BJ (cell line): ENCODE measurements at regions of chr10 and their contacts with region 1.

Region 1: DNA sequence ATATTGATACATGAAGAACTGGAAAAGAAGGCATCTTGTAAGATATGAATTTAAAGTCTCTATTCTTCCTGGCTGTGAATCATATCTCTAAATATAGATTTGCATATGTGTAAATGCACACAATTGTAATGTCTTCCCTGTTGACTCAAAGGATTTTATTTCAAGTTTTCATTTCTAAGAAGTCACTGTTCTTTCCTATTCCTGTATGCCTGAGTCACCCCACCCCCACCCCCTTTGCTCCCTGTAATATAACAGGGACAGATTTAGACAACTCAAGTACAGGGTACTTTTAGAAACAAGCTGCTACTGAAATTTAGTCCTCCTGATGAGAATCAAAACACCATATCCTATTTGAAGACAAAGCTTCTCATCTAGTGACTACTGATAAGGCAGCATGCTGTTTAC is 43.0 kb upstream of the HECTD2 start:
- DNase-seq: no peak
- H3K4me3 ChIP-seq: no peak overlapping the region
- H3K27me3 ChIP-seq: no peaks in the 10 kb centered on the region; the same call in 1 of the 2 replicates
- CTCF ChIP-seq: no peak

Region 2: DNA sequence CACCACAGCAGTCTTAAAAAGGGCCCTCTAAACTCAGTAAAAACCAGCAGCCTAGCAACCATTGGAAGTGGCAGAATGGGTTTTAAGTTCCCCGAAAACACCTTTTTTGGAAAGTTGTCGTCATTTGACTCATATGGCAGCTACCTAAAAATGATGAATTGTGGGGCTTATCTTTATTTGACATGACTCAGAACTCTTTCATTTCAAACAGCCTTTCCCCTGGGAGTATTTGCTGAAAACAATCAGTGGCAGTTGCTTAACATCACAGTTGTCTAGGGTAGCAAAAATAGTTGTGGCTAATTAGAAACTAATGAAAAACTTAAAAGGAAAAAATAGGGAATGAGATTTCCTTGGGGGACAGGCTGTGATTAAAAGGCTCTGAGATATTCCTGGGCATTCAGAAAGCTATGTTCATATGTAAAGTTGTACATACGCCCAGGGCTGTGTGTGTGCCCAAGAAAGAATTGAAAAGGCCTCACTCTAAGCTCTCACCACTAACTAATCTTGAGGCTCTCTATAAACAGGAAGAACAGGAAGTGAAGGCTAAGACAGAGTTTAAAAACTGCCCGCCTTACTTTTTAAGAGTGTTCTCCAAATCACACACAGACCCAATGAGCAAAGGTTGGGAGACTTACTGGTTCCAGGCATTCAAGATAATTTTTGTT is 38.7 kb before region 1 on chr10:
- CTCF ChIA-PET with region 1: no interaction called
- POLR2A ChIA-PET with region 1: no interaction called
- DNase-seq: no peak
- H3K4me3 ChIP-seq: no peak overlapping the region
- H3K27me3 ChIP-seq: no peaks in the 10 kb centered on the region
- CTCF ChIP-seq: no peak

Region 3: GRCh38 chr10:91378061-91378460 is 10.9 kb after region 1 on chr10:
- CTCF ChIA-PET with region 1: interaction called, 11 read pairs
- POLR2A ChIA-PET with region 1: no interaction called
- DNase-seq: no peak
- H3K4me3 ChIP-seq: no peak overlapping the region
- H3K27me3 ChIP-seq: peaks cover 17% of the 10 kb centered on the region
- CTCF ChIP-seq: no peak